Activated T-helper 1 cell treated with anti-CD3 and anti-CD28 coated beads, Interleukin-12 subunit alpha, Interleukin-12 subunit beta, Interleukin-2, Interleukin-4 antibody, amounts not matched to agents 30 ng/mL and 10 ng/mL and 1 ng/mL, durations not matched to agents 14 hours and 24 hours and 36 hours (primary cell): ENCODE measurements at regions of chr10 and their contacts with region 1.

Region 1: DNA sequence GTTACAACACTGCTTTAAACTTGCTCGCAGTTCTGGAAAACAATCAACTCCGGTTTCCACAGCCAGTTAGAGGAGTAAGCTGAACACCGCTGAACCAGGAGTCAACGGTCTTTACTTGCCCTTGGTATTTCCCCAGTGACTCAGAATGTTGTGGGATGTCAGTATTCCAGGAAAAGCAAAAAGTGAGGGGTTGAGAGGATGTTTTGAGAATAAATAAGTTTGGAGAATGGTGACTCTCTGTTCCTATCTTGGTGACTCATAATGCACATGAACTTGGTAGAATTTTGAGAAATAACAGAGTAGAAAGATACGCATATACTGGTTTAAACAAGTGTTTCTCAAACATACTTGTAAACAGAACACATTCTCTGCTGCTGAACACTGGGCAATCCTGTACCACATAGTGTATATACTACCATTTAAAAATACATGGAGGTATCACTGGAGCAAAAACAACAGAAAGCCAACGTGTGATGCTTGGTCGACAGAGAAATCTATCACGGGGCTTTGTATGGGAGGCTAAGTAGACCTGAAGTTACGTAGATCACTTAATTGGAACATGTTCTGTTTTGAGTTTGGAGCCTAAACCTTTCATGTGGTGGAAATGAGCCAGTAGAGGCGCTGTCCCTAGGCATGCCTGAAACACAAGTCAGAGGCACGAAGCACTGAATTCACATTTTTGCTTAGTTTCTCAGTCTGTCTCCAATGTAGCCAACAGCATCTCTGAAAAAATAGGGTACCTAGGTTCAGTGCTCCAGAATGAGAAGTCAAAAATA is 534.3 kb downstream of the PARD3 start:
- DNase-seq: no peak
- H3K4me3 Mint-ChIP-seq: peak overlapping the region; percentile 45
- H3K27ac Mint-ChIP-seq: peak overlapping the region; percentile 76
- H3K4me1 Mint-ChIP-seq: peaks cover 31% of the 10 kb centered on the region
- H3K27me3 Mint-ChIP-seq: no peaks in the 10 kb centered on the region

Region 2: DNA sequence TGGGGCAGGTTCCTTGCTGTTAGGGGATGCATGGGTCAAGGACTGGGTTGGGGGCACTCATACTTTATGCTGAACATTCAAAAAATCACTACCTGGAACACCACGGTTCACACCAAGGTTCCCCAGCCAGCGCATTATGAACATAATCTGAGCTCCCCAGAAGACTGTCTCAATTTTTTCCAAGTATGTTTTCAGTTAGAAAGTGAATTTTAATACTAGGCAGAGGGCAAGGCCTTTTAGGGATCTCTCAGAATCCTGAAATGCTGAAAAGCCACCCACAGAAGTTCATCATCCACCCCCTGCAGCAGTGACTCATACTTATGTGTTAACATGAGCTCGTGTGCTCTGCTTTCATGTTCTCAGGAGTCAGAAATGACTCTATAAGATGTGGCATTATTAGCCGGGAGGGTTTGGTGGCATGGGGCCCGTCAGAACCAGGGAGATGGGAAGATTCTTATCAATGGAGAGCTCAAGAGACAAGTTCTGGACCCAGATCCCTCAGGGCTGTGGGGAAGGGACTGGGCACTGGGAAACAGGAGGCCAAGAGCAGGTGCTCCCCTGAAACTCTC is 1137.5 kb before region 1 on chr10:
- intact Hi-C with region 1: loop called (anchors 5 kb)
- DNase-seq: peak; percentile 31
- H3K4me3 Mint-ChIP-seq: no peak overlapping the region
- H3K27ac Mint-ChIP-seq: peak overlapping the region; percentile 70
- H3K4me1 Mint-ChIP-seq: peaks cover 49% of the 10 kb centered on the region
- H3K27me3 Mint-ChIP-seq: no peaks in the 10 kb centered on the region

Region 3: GRCh38 chr10:34049887-34050286 is 230.9 kb before region 1 on chr10:
- intact Hi-C with region 1: loop called (anchors 1 kb)
- DNase-seq: no peak
- H3K4me3 Mint-ChIP-seq: no peak overlapping the region
- H3K27ac Mint-ChIP-seq: peak overlapping the region; percentile 40
- H3K4me1 Mint-ChIP-seq: peaks cover 26% of the 10 kb centered on the region
- H3K27me3 Mint-ChIP-seq: no peaks in the 10 kb centered on the region

Region 4: GRCh38 chr10:34374356-34375045 is 93.7 kb after region 1 on chr10:
- intact Hi-C with region 1: loop called (anchors 1 kb)
- DNase-seq: no peak
- H3K4me3 Mint-ChIP-seq: no peak overlapping the region
- H3K27ac Mint-ChIP-seq: peak overlapping the region; percentile 59
- H3K4me1 Mint-ChIP-seq: peaks cover 11% of the 10 kb centered on the region
- H3K27me3 Mint-ChIP-seq: peaks cover 2% of the 10 kb centered on the region